ENCODE measurements at regions of chr6 and their contacts with region 1.

Region 1: DNA sequence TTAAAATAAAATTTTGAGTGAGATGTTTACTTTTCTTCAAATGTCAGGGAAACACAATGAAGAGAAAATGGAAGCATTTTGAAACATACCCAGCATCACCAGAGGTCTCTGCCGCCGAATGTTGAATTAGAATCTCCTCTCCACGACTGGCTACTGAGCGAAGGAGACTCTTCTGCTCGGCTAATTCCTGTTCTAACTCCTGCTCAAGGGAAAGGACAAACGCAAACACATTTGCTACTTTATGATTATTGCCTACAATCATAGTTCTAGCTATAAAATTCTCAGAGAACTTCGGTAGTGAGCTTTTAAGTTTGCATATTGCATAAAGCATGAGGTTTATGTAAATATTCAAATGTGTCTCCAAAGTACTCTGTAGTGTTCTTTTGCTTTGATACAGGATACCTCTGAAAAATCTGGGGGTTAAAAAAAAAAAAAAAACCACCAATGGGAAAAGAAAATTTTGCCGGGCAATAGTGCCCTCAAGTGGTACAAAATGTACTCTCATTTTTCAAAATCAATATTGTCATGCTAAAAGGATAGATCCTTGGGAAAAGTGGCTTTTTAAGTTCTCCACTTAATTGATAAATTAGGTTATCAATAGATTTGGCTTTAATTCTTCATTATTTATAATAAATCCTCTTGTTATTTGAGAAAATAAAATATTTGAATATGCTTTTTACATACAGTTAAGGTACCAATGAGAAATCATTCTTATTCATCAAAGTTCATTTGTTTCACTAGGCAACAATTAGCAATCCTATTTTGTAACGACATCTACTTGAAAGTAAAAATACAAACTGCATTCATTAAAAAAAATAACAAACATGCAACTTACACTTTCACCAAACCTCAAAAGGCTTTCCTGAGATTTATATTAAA is 369.0 kb downstream of the SYNE1 start:
- DNase-seq: peak; percentile 42
- ATAC-seq: no peak
- H3K4me3 Mint-ChIP-seq: no peak overlapping the region
- H3K27ac Mint-ChIP-seq: no peak overlapping the region
- H3K4me1 Mint-ChIP-seq: peaks cover 11% of the 10 kb centered on the region
- H3K27me3 Mint-ChIP-seq: no peaks in the 10 kb centered on the region

Region 2: GRCh38 chr6:152124429-152125074 is 143.7 kb before region 1 on chr6:
- CTCF ChIA-PET with region 1: interaction called, 5 read pairs
- POLR2A ChIA-PET with region 1: no interaction called
- intact Hi-C with region 1: loop called in 1 of 2 experiments (anchors 5 kb)
- DNase-seq: no peak
- ATAC-seq: peak; percentile 49
- H3K4me3 Mint-ChIP-seq: no peak overlapping the region
- H3K27ac Mint-ChIP-seq: no peak overlapping the region
- H3K4me1 Mint-ChIP-seq: no peaks in the 10 kb centered on the region
- H3K27me3 Mint-ChIP-seq: no peaks in the 10 kb centered on the region

Region 3: DNA sequence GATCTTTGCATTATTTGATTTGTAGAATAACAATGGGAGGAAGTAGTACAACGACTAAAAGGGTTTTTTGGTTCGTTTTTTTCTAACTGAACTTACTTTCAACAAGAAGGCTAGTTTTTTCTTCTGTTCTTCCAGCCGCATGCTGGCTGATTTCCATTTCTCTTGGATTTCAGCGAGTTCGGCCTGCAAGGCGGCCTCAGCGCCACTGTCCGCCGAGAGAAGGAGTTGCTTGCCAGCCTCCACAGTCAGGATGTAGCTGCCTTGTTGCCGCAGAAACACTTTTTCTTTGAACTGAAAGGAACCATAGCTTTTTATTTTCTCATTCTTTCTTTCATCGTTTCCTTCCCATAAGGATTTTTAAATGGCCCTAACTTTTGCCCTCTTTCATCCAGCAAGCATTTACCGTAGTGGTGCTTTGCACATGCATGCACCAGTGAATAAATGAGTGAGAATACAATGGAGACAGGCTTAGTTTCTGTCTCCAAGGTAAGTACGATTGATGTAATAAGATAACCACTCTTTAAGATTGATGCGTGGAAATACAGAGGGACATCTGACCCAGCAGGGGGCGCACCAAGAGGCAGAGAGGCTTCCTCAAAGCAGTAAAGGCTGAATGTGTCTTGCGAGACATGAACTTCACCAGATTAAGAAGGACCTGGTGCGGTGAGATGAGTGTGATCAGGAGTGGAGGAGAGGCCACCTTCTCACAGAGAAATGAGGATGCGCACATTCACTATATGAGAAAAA is 62.0 kb before region 1 on chr6:
- CTCF ChIA-PET with region 1: no interaction called
- POLR2A ChIA-PET with region 1: no interaction called
- intact Hi-C with region 1: loop called in 1 of 2 experiments (anchors 1 kb)
- DNase-seq: peak; percentile 77
- ATAC-seq: peak; percentile 70
- H3K4me3 Mint-ChIP-seq: no peak overlapping the region
- H3K27ac Mint-ChIP-seq: no peak overlapping the region
- H3K4me1 Mint-ChIP-seq: peaks cover 4% of the 10 kb centered on the region
- H3K27me3 Mint-ChIP-seq: no peaks in the 10 kb centered on the region

Region 4: GRCh38 chr6:152295346-152295745 is 27.1 kb after region 1 on chr6:
- CTCF ChIA-PET with region 1: no interaction called
- POLR2A ChIA-PET with region 1: no interaction called
- intact Hi-C with region 1: no loop called
- DNase-seq: no peak
- ATAC-seq: no peak
- H3K4me3 Mint-ChIP-seq: no peak overlapping the region
- H3K27ac Mint-ChIP-seq: no peak overlapping the region
- H3K4me1 Mint-ChIP-seq: peaks cover 32% of the 10 kb centered on the region
- H3K27me3 Mint-ChIP-seq: no peaks in the 10 kb centered on the region

Region 5: GRCh38 chr6:152453421-152453820 is 185.2 kb after region 1 on chr6:
- CTCF ChIA-PET with region 1: no interaction called
- POLR2A ChIA-PET with region 1: no interaction called
- intact Hi-C with region 1: no loop called
- DNase-seq: no peak
- ATAC-seq: no peak
- H3K4me3 Mint-ChIP-seq: no peak overlapping the region
- H3K27ac Mint-ChIP-seq: no peak overlapping the region
- H3K4me1 Mint-ChIP-seq: no peaks in the 10 kb centered on the region
- H3K27me3 Mint-ChIP-seq: peaks cover 14% of the 10 kb centered on the region